Activated CD4-positive, alpha-beta memory T cell treated with anti-CD3 and anti-CD28 coated beads for 36 hours (primary cell): ENCODE measurements at regions of chr12 and their contacts with region 1.

Region 1: GRCh38 chr12:111546758-111547383 is 52.2 kb downstream of the ATXN2 start:
- DNase-seq: peak; percentile 54
- H3K4me3 Mint-ChIP-seq: no peak overlapping the region
- H3K27ac Mint-ChIP-seq: peak overlapping the region; percentile 51
- H3K4me1 Mint-ChIP-seq: peaks cover 21% of the 10 kb centered on the region
- H3K27me3 Mint-ChIP-seq: no peaks in the 10 kb centered on the region

Region 2: DNA sequence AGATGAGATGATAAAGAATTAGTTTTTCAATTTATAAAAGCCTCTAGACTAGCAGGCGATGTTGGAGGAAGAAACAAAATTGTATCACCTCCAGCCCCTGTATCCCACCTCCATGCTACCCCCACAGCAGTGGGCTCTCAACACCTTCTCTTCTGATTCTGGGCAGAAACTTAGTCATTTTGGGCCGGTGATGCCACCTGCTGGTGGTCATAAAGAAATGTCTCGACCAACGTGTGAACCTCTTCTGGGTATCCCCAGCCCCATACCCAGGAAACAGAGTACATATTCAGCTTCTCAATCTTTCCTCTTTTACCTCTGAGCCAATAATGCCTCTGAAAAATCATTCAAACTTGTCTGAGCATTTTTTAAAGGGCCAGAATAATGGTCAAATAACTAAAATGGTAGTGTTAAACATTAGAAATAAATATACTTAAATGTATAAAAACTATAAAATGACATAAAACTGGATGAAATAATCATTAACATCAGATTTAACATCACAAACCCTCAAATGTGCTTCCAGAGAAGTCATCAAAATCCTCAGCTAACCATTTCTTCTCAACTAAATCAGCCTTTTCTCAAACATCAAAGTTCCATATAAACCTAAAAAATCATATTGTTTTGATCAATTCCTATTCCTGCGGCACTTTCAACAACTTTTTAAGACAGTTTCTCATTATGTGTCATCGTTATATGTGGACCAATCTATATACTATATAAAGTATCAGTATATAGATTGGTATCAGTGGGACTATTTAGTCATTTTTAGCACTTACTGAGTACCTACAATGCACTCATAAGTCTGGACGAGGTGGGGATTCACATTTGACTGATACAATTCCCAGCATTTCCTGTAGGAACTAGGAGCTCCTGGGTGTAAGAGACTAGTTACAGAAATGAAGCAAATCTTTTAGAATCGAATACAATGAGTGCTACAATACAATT is 17.2 kb before region 1 on chr12:
- CTCF ChIA-PET with region 1: interaction called, 8 read pairs
- POLR2A ChIA-PET with region 1: interaction called, 3 read pairs
- intact Hi-C with region 1: loop called (anchors 2 kb)
- DNase-seq: peak; percentile 78
- H3K4me3 Mint-ChIP-seq: no peak overlapping the region
- H3K27ac Mint-ChIP-seq: peak overlapping the region; percentile 44
- H3K4me1 Mint-ChIP-seq: peaks cover 12% of the 10 kb centered on the region
- H3K27me3 Mint-ChIP-seq: no peaks in the 10 kb centered on the region

Region 3: GRCh38 chr12:111599459-111600204 is 52.8 kb after region 1 on chr12:
- CTCF ChIA-PET with region 1: no interaction called
- POLR2A ChIA-PET with region 1: no interaction called
- intact Hi-C with region 1: loop called (anchors 5 kb)
- DNase-seq: peak; percentile 89
- H3K4me3 Mint-ChIP-seq: peak overlapping the region; percentile 85
- H3K27ac Mint-ChIP-seq: peak overlapping the region; percentile 89
- H3K4me1 Mint-ChIP-seq: peaks cover 26% of the 10 kb centered on the region
- H3K27me3 Mint-ChIP-seq: no peaks in the 10 kb centered on the region